ENCODE measurements at regions of chr20 and their contacts with region 1.

Region 1: GRCh38 chr20:17995967-17996819 is 27.4 kb downstream of the MGME1 start:
- DNase-seq: peak; percentile 55 to 68 (median 64)
- H3K4me3 ChIP-seq: no peak overlapping the region
- H3K4me3 Mint-ChIP-seq: peak overlapping the region in 1 of 8 donors; percentile 29
- H3K27ac ChIP-seq: no peak overlapping the region
- H3K27ac Mint-ChIP-seq: peak overlapping the region in 1 of 7 donors; percentile 6
- H3K4me1 ChIP-seq: peaks cover 18% of the 10 kb centered on the region
- H3K4me1 Mint-ChIP-seq: peaks cover 13 to 27% (median 19%) of the 10 kb centered on the region in 4 donors
- H3K27me3 ChIP-seq: no peaks in the 10 kb centered on the region
- H3K27me3 Mint-ChIP-seq: peaks cover 0 to 3% of the 10 kb centered on the region in 2 donors

Region 2: GRCh38 chr20:17536944-17537444 is 459.2 kb before region 1 on chr20:
- CTCF ChIA-PET with region 1: interaction called, 4 read pairs
- POLR2A ChIA-PET with region 1: no interaction called
- intact Hi-C with region 1: loop called (anchors 1 kb)
- DNase-seq: peak; percentile 64 to 76 (median 70)
- H3K4me3 ChIP-seq: no peak overlapping the region
- H3K4me3 Mint-ChIP-seq: no peak overlapping the region
- H3K27ac ChIP-seq: no peak overlapping the region
- H3K27ac Mint-ChIP-seq: no peak overlapping the region
- H3K4me1 ChIP-seq: peaks cover 8% of the 10 kb centered on the region
- H3K4me1 Mint-ChIP-seq: peaks cover 10 to 18% (median 15%) of the 10 kb centered on the region in 4 donors
- H3K27me3 ChIP-seq: no peaks in the 10 kb centered on the region
- H3K27me3 Mint-ChIP-seq: peaks cover 16 to 20% of the 10 kb centered on the region in 2 donors

Region 3: DNA sequence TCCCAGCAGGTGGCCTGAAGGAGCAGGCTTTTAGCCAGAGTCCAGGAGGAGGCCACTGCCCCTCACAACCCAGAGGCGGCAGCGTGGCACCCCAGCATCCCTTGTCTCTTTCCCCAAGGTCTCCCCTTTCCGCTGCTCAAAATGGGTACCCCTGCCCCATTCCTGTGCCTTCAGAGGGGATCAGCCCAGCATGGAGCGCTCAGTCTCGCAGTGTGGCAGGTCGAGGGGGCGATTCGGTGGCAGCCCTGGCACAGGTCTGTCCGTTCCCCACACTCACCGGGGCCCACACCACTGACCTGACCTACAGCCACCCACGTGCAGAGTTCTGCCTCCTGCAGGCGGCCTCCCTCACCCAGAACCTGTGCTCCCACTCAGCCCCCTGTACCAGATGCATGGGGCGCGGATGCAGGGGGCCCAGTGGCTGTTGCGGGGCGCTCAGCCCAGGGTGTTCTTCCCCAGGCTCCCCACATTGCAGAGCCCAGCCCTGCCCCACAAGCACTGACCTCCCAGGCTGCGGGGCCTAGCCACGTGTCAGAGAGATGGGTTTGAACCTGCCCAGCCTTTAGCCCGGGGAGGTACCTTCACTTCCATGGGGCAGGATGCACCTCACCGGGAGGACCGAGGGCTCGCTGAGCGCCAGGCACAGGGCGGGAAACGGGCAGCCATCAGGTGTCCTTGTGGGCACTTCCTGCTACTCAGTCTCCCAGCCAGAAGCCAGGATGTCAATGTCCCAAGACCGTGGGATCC is 384.5 kb before region 1 on chr20:
- CTCF ChIA-PET with region 1: interaction called, 3 read pairs
- POLR2A ChIA-PET with region 1: no interaction called
- intact Hi-C with region 1: loop called (anchors 1 kb)
- DNase-seq: peak in 3 of 5 donors; percentile 18 to 39 (median 22)
- H3K4me3 ChIP-seq: peak overlapping the region in 1 of 2 donors; percentile 34
- H3K4me3 Mint-ChIP-seq: peak overlapping the region in 7 of 8 donors; percentile 27 to 98 (median 79)
- H3K27ac ChIP-seq: peak overlapping the region; percentile 57
- H3K27ac Mint-ChIP-seq: peak overlapping the region; percentile 59 to 100 (median 95)
- H3K4me1 ChIP-seq: peaks cover 44% of the 10 kb centered on the region
- H3K4me1 Mint-ChIP-seq: peaks cover 25 to 48% (median 36%) of the 10 kb centered on the region in 4 donors
- H3K27me3 ChIP-seq: no peaks in the 10 kb centered on the region
- H3K27me3 Mint-ChIP-seq: no peaks in the 10 kb centered on the region

Region 4: GRCh38 chr20:17938871-17939619 is 57.1 kb before region 1 on chr20:
- CTCF ChIA-PET with region 1: interaction called, 10 read pairs
- POLR2A ChIA-PET with region 1: no interaction called
- intact Hi-C with region 1: no loop called
- DNase-seq: peak; percentile 33 to 56 (median 48)
- H3K4me3 ChIP-seq: no peak overlapping the region
- H3K4me3 Mint-ChIP-seq: peak overlapping the region in 5 of 8 donors; percentile 20 to 62 (median 47)
- H3K27ac ChIP-seq: no peak overlapping the region
- H3K27ac Mint-ChIP-seq: peak overlapping the region in 4 of 7 donors; percentile 27 to 62 (median 37)
- H3K4me1 ChIP-seq: peaks cover 13% of the 10 kb centered on the region
- H3K4me1 Mint-ChIP-seq: peaks cover 4 to 14% (median 11%) of the 10 kb centered on the region in 4 donors
- H3K27me3 ChIP-seq: no peaks in the 10 kb centered on the region
- H3K27me3 Mint-ChIP-seq: no peaks in the 10 kb centered on the region

Region 5: DNA sequence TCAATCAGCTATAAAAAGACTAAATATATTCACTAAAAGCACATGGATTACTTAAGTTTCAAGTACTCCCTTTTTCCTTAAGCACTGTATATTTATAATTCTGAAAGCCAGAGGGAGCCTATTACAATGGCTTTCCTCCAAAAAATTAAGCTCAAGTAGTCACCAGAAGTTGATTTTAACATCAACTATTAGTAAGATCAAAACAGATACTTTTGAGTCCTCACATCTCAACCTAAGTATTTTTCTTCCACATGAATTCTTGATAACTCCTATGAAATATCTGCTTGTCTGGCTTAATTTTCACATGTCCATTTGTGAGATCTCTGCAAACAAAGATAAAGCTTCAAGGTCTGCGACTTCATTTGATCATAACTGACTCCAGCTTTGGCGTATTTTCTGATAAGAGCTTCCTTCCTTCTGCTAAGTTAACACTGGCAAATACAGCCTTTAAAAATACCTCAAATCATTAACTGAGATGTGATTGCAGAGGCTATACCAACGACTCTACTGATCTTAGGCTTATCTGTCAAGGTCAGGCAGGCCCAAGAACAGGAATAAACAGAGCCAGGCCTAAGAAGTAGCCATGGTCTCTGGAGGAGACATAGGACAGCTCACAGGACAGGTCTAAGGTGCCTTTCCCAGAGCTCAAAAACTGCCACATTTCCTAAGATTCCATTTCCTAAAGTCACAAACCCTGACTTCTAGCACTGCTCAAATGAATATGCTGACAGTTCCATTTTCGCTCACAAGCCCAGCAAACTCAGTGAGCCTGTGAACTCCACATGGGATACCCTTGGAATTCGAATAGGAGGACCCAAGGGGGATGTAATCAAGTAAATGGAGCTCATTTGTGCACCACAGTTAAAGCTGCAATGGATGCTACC is 37.6 kb before region 1 on chr20:
- CTCF ChIA-PET with region 1: interaction called, 21 read pairs
- POLR2A ChIA-PET with region 1: interaction called, 3 read pairs
- intact Hi-C with region 1: loop called (anchors 5 kb)
- DNase-seq: no peak
- H3K4me3 ChIP-seq: peak overlapping the region in 1 of 2 donors; percentile 4
- H3K4me3 Mint-ChIP-seq: peak overlapping the region in 6 of 8 donors; percentile 36 to 76 (median 66)
- H3K27ac ChIP-seq: peak overlapping the region; percentile 33
- H3K27ac Mint-ChIP-seq: peak overlapping the region; percentile 26 to 99 (median 82)
- H3K4me1 ChIP-seq: peaks cover 84% of the 10 kb centered on the region
- H3K4me1 Mint-ChIP-seq: peaks cover 54 to 83% (median 72%) of the 10 kb centered on the region in 4 donors
- H3K27me3 ChIP-seq: no peaks in the 10 kb centered on the region
- H3K27me3 Mint-ChIP-seq: no peaks in the 10 kb centered on the region

Measured in CD4-positive, alpha-beta memory T cell (primary cell).